Breast epithelium (tissue), 4 donors: ENCODE measurements at regions of chr1 and their contacts with region 1.

Region 1: GRCh38 chr1:235683653-235684052 is 34.1 kb upstream of the GNG4 start:
- DNase-seq: no peak
- H3K4me3 ChIP-seq: no peak overlapping the region
- H3K27ac ChIP-seq: no peak overlapping the region
- H3K4me1 ChIP-seq: no peaks in the 10 kb centered on the region
- H3K27me3 ChIP-seq: no peaks in the 10 kb centered on the region
- CTCF ChIP-seq: no peak
- POLR2A ChIP-seq: no peak

Region 2: DNA sequence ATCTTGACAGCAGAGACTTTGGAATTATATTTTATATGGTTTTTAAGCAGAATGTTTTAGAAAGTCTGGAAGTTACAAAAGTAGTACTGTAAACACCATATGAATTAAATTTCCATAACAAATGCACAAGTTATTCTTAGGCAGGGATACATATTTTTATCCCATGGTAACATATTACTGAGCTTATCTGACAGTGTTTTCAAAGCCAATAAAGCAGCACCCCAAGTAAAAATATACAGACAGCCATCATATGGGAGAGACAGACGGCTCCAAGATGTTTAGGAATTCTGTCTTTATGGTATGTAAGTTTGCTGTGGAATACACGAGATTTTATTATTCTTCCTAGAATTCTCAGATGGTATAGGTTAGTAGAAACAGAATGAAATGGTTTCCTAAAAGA is 22.1 kb before region 1 on chr1:
- intact Hi-C with region 1: loop called (anchors 2 kb)
- DNase-seq: no peak
- H3K4me3 ChIP-seq: no peak overlapping the region
- H3K27ac ChIP-seq: no peak overlapping the region
- H3K4me1 ChIP-seq: no peaks in the 10 kb centered on the region
- H3K27me3 ChIP-seq: no peaks in the 10 kb centered on the region
- CTCF ChIP-seq: no peak
- POLR2A ChIP-seq: no peak